Cardiac septum (tissue), 1 donor: ENCODE measurements at regions of chr11 and their contacts with region 1.

Region 1: GRCh38 chr11:11481371-11481770 is 128.3 kb upstream of the CSNK2A3 start:
- DNase-seq: peak; percentile 74

Region 2: GRCh38 chr11:11407065-11407762 is 74.2 kb before region 1 on chr11:
- intact Hi-C with region 1: loop called (anchors 5 kb)
- DNase-seq: no peak

Region 3: DNA sequence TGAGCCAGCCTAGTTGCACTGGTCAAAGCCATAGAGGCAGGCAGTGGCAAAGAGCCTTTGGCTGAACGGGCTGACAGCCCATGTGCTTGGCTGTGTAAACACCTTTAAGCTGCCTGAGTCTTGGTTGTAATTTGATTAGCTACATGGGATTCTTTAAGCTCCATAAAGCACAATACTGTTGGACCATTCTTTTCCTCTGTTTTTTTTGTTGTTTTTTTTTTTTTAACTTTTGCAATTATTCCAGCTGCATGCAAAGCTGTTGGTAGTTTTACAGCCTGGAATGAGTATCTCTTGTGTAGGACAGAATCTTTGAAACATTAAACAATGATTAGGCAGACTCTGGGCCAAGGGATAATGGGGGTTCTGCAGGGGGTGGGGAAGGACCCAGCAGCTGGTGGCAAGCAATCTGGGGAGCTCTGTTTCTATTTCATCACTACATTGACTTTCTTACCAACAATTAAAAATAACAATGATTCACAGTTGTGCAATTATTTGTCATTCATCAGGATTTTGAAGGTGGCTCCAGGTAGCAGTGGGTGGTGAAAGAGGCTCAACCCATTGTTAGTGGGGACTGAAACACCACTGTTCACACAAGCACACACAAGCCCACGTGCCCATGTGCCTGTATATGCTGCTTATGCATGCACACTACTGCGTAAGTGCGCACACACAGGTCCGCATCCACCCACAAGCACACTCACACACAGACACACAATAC is 58.8 kb before region 1 on chr11:
- intact Hi-C with region 1: no loop called
- DNase-seq: no peak

Region 4: GRCh38 chr11:11463405-11463804 is 18.0 kb before region 1 on chr11:
- intact Hi-C with region 1: no loop called
- DNase-seq: no peak